Right ventricle myocardium inferior (tissue), 1 donor: ENCODE measurements at regions of chr17 and their contacts with region 1.

Region 1: DNA sequence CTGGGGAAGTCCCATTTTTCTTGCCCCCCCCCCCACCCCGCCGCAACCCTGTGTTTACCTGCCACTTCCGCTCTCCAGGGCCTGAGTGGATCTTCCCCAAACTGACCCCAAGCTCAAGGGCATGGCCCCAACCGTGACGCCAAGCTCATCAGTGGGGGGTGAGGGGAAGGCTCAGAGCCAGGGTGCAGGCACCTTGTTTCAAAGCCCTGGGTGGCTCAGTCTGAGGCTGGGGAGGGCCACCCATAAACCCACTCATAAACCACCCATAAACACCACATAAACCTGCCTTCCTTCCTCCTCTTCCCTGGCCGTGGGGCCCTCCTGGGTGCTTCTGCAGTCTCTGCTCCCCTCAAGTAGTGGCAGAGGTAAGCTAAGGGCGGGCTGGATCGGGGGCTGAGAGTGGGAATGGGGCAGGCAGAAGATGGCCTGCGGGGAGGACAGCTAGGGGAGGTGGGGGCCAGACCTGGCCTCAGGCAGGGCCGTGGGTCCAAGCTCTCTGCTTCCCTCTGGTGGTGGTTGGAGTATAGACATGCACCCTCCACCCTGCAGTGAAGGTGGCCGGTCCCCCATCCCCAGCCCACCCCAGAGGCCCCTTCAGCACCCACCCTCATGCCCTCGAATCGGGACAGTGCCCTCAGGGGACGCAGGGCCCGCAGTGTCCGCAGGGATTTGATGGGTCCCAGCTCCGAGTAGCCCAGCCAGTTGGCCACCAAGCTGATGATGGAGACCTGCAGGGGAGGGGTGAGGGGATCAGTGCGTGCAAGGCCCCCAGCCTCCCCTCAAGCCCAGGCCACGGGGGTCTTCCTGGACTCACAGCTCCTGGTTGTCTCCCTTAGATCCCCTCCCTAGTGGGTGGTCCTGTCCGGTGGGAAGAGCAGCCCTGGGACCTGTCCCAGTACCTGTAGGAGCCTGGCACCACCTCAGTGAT is 14.6 kb upstream of the CD79B start:
- DNase-seq: peak; percentile 63
- ATAC-seq: peak; percentile 55

Region 2: DNA sequence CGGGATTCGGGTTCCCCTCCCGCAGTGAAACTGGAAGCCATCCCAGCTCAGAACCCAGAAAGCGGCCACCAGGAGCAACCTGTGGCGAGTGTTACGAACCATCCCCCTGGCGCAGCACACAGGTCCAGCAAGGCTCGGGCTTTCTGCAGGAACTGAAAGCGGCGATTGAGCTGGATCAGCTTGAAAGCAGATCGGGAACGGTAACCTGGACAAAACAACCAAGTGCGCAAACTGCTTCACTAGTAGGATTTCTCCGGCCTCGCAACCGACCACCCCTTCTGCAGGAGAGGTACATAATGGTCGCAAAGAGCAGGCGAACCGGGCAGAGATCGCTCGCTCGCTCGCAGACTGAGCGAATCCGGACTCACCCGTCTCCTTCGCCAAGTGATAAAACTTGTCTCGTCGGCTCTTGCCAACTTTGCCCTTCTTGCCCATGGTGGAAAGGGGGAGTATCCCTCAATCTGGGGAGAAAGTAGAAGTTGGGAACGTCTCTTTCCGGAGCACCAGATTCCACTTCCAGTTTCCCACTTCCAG is 120.2 kb before region 1 on chr17:
- intact Hi-C with region 1: no loop called
- DNase-seq: peak; percentile 74
- ATAC-seq: peak; percentile 2

Region 3: GRCh38 chr17:63984651-63985386 is 38.1 kb after region 1 on chr17:
- intact Hi-C with region 1: loop called (anchors 5 kb)
- DNase-seq: peak; percentile 55
- ATAC-seq: peak; percentile 41